Psoas muscle (tissue), 8 donors: ENCODE measurements at regions of chr4 and their contacts with region 1.

Region 1: DNA sequence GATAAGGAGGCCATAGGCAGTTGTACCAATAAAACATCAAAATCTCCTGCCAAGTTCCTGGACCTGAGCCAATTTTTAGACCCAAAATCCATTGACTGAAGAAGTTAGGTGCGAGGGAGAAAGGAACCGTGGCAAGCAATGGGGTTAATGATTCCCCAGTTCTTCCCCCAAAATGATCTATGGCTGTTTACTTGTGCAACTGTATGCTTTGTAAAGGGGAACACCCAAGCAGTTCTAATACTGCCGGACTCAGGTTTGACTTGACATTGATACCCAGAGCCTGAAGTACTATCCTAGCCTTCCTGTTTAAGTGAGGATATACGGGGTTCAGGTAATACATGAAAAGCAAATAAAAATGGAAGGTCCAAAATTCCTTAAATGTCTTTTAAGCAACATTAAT is 6.7 kb upstream of the EIF4E start:
- DNase-seq: no peak
- ATAC-seq: no peak
- H3K4me3 ChIP-seq: no peak overlapping the region
- H3K27ac ChIP-seq: no peak overlapping the region
- H3K4me1 ChIP-seq: peaks cover 6% of the 10 kb centered on the region
- H3K27me3 ChIP-seq: no peaks in the 10 kb centered on the region
- CTCF ChIP-seq: no peak

Region 2: GRCh38 chr4:98995183-98996055 is 59.8 kb after region 1 on chr4 and contains the start of gene METAP1:
- intact Hi-C with region 1: loop called (anchors 2 to 5 kb)
- DNase-seq: peak; percentile 96 to 98
- ATAC-seq: peak; percentile 92 to 94 (median 92)
- H3K4me3 ChIP-seq: peak within 1 kb of the TSS; percentile 98
- H3K27ac ChIP-seq: peak within 1 kb of the TSS; percentile 94
- H3K4me1 ChIP-seq: peaks cover 13% of the 10 kb centered on the region
- H3K27me3 ChIP-seq: no peaks in the 10 kb centered on the region
- CTCF ChIP-seq: peak; percentile 49
- total RNA-seq, gene METAP1: 18.2 to 36.9 (median 30.0) TPM

Region 3: DNA sequence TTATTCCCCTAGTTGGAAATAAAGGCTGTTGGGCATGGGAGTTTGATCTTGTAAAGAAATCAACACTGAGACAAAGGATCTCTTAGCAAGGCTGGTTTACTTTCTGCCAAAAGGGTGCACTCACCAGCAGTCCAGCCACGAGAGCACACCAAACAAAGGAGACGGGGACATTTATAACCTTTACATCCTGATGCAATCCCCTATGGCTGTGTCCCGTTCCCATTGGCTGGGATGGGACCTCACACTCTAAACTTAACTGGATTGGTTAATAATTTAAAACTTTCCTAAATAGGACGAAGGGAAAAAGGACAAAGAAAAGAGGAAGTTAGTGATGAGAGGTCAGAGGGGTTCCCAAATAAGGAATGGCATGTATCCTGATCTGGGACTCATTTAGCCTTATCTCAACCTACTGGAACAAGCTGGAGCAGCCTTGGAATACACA is 77.8 kb after region 1 on chr4:
- intact Hi-C with region 1: no loop called
- DNase-seq: no peak
- ATAC-seq: no peak
- H3K4me3 ChIP-seq: no peak overlapping the region
- H3K27ac ChIP-seq: no peak overlapping the region
- H3K4me1 ChIP-seq: no peaks in the 10 kb centered on the region
- H3K27me3 ChIP-seq: no peaks in the 10 kb centered on the region
- CTCF ChIP-seq: no peak